ENCODE measurements at regions of chr2 and their contacts with region 1.

Region 1: GRCh38 chr2:85327822-85328617 is at the start of gene TGOLN2:
- DNase-seq: peak; percentile 88 to 96 (median 94)
- ATAC-seq: peak; percentile 84
- H3K4me3 ChIP-seq: peak within 1 kb of the TSS; percentile 89
- H3K4me3 Mint-ChIP-seq: peak within 1 kb of the TSS; percentile 96
- H3K27ac ChIP-seq: peak within 1 kb of the TSS; percentile 95 to 97
- H3K27ac Mint-ChIP-seq: peak within 1 kb of the TSS; percentile 97
- H3K4me1 ChIP-seq: peaks cover 35% of the 10 kb centered on the region
- H3K4me1 Mint-ChIP-seq: peaks cover 54% of the 10 kb centered on the region
- H3K27me3 ChIP-seq: no peaks in the 10 kb centered on the region
- H3K27me3 Mint-ChIP-seq: no peaks in the 10 kb centered on the region
- CTCF ChIP-seq: no peak
- total RNA-seq, gene TGOLN2: 172 to 175 TPM

Region 2: DNA sequence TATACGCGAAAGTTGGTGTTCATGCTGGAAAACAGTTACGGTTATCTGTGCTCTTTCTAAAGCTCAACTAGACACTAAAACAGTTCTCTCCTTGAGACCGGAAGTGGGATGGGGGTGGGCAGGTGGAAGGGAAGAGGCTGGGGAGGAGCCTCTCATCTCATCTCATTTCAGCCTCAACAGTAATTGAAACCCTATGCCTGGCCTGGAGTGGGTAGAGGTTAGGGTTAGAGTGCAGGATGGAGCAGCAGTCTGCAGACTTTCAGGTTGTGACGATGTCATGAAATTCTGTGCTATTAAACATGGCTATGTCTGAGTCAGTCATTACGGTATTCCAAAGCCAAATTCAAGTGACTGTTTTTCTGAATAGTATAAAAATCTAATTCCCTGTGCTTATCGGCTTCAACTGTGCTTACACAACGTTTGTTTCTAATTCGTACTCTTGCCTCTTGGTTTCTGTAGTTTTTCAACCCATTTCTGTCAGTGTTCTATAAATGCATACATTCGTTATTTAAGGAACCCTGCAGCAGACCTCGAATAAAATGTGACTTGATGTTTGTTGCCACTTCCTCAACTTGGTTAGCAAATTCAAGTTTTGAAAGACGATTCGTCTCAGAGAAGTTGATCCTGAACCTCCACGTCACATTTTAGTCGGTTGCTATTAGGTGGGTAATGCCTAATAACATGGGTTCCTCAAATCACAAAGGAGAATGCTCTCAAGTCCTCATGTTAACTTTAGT is 270.6 kb before region 1 on chr2:
- CTCF ChIA-PET with region 1: no interaction called
- POLR2A ChIA-PET with region 1: no interaction called
- intact Hi-C with region 1: no loop called
- DNase-seq: peak in 1 of 14 experiments; percentile 14
- ATAC-seq: no peak
- H3K4me3 ChIP-seq: no peak overlapping the region
- H3K4me3 Mint-ChIP-seq: no peak overlapping the region
- H3K27ac ChIP-seq: no peak overlapping the region
- H3K27ac Mint-ChIP-seq: peak overlapping the region; percentile 57
- H3K4me1 ChIP-seq: peaks cover 5% of the 10 kb centered on the region
- H3K4me1 Mint-ChIP-seq: peaks cover 46% of the 10 kb centered on the region
- H3K27me3 ChIP-seq: no peaks in the 10 kb centered on the region
- H3K27me3 Mint-ChIP-seq: no peaks in the 10 kb centered on the region
- CTCF ChIP-seq: no peak

Region 3: GRCh38 chr2:85288244-85288725 is 39.7 kb before region 1 on chr2:
- CTCF ChIA-PET with region 1: no interaction called
- POLR2A ChIA-PET with region 1: interaction called, 15 read pairs
- intact Hi-C with region 1: no loop called
- DNase-seq: no peak
- ATAC-seq: no peak
- H3K4me3 ChIP-seq: no peak overlapping the region
- H3K4me3 Mint-ChIP-seq: no peak overlapping the region
- H3K27ac ChIP-seq: no peak overlapping the region
- H3K27ac Mint-ChIP-seq: no peak overlapping the region
- H3K4me1 ChIP-seq: peaks cover 24% of the 10 kb centered on the region
- H3K4me1 Mint-ChIP-seq: peaks cover 30% of the 10 kb centered on the region
- H3K27me3 ChIP-seq: no peaks in the 10 kb centered on the region
- H3K27me3 Mint-ChIP-seq: no peaks in the 10 kb centered on the region
- CTCF ChIP-seq: no peak

Region 4: DNA sequence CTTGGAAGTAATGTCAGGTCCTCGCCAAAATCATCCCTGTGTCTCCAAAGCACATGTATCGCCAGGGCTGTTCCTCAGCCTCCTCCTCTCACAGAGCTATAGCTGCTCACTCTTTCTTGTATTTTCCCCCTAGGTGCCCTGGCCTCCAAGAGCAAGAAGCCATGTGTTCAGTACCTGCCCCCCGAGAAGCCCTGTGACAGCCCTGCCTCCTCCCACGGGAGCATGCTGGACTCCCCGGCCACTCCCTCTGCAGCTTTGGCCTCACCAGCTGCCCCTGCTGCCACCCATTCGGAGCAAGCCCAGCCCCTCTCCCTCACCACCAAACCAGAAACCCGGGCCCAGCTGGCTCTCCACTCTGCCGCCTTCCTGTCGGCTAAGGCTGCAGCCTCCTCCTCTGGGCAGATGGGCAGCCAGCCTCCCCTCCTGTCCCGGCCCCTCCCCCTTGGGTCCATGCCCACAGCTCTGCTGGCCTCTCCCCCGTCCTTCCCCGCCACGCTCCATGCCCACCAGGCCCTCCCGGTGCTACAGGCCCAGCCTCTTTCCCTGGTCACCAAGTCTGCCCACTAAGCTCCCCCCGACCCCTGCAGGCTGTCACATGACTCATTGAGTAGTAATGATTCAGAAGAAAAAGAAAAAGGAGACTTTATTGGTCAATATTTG is 19.0 kb before region 1 on chr2:
- CTCF ChIA-PET with region 1: interaction called, 4 read pairs
- POLR2A ChIA-PET with region 1: interaction called, 109 read pairs
- intact Hi-C with region 1: loop called in 1 of 2 experiments (anchors 1 kb)
- DNase-seq: peak in 2 of 14 experiments; percentile 23 to 34
- ATAC-seq: peak; percentile 6
- H3K4me3 ChIP-seq: peak overlapping the region; percentile 41
- H3K4me3 Mint-ChIP-seq: peak overlapping the region; percentile 76
- H3K27ac ChIP-seq: peak overlapping the region; percentile 42 to 52
- H3K27ac Mint-ChIP-seq: peak overlapping the region; percentile 88
- H3K4me1 ChIP-seq: peaks cover 45% of the 10 kb centered on the region
- H3K4me1 Mint-ChIP-seq: peaks cover 36% of the 10 kb centered on the region
- H3K27me3 ChIP-seq: no peaks in the 10 kb centered on the region
- H3K27me3 Mint-ChIP-seq: no peaks in the 10 kb centered on the region
- CTCF ChIP-seq: no peak

Region 5: GRCh38 chr2:85376291-85377065 is 48.5 kb after region 1 on chr2:
- CTCF ChIA-PET with region 1: no interaction called
- POLR2A ChIA-PET with region 1: no interaction called
- intact Hi-C with region 1: no loop called
- DNase-seq: no peak
- ATAC-seq: no peak
- H3K4me3 ChIP-seq: no peak overlapping the region
- H3K4me3 Mint-ChIP-seq: no peak overlapping the region
- H3K27ac ChIP-seq: no peak overlapping the region
- H3K27ac Mint-ChIP-seq: no peak overlapping the region
- H3K4me1 ChIP-seq: no peaks in the 10 kb centered on the region
- H3K4me1 Mint-ChIP-seq: no peaks in the 10 kb centered on the region
- H3K27me3 ChIP-seq: no peaks in the 10 kb centered on the region
- H3K27me3 Mint-ChIP-seq: no peaks in the 10 kb centered on the region
- CTCF ChIP-seq: no peak

Region 6: DNA sequence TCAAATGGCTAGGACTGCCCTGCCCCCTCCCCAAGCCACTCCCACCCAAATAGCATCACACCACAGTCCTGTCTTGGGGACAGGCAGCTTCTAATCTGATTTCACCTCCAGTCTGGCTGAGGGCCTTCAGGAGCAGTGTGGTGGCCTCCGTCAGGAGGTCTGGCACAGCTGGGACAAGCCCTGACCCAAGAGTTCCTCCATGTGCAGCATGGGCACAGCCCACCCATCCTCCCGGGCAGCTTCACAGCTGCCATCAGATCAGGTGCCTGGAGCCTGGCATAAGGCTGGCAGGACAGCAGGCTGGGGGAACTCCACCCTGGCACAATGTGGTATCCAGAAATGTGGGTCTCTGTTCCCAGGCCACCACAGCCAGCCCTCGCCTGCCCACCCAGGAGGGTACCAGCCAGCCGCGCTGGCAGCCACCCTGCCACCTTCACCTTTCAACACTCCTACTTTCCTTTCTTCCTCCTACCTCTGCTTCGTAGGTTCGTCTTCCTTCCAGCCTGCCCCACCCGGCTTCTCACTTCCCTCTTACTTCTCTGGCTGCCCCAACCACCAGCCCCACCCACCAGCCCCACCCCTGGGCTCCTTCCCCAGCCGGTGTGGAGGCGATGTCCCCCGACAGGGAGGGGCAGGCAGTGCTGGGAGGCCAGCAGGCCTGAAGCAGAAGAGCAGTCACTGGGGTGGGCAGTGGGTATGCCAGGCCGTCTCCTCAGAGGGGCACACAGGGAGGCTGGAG is 82.0 kb after region 1 on chr2 and contains the start of gene CAPG:
- CTCF ChIA-PET with region 1: no interaction called
- POLR2A ChIA-PET with region 1: interaction called, 21 read pairs
- intact Hi-C with region 1: no loop called
- DNase-seq: peak in 11 of 14 experiments; percentile 17 to 68 (median 44)
- ATAC-seq: peak; percentile 13
- H3K4me3 ChIP-seq: peak within 1 kb of the TSS; percentile 56
- H3K4me3 Mint-ChIP-seq: peak within 1 kb of the TSS; percentile 81
- H3K27ac ChIP-seq: peak within 1 kb of the TSS; percentile 31 to 34
- H3K27ac Mint-ChIP-seq: peak within 1 kb of the TSS; percentile 77
- H3K4me1 ChIP-seq: peaks cover 69% of the 10 kb centered on the region
- H3K4me1 Mint-ChIP-seq: peaks cover 67% of the 10 kb centered on the region
- H3K27me3 ChIP-seq: peaks cover 0 to 5% of the 10 kb centered on the region in 2 experiments
- H3K27me3 Mint-ChIP-seq: peaks cover 2% of the 10 kb centered on the region
- CTCF ChIP-seq: no peak
- total RNA-seq, gene CAPG: 21.7 to 23.3 TPM

Region 7: GRCh38 chr2:85437488-85438284 is 109.7 kb after region 1 on chr2:
- CTCF ChIA-PET with region 1: no interaction called
- POLR2A ChIA-PET with region 1: interaction called, 17 read pairs
- intact Hi-C with region 1: no loop called
- DNase-seq: peak; percentile 49 to 91 (median 70)
- ATAC-seq: peak; percentile 82
- H3K4me3 ChIP-seq: peak overlapping the region; percentile 51
- H3K4me3 Mint-ChIP-seq: peak overlapping the region; percentile 90
- H3K27ac ChIP-seq: peak overlapping the region; percentile 55 to 87
- H3K27ac Mint-ChIP-seq: peak overlapping the region; percentile 91
- H3K4me1 ChIP-seq: peaks cover 39% of the 10 kb centered on the region
- H3K4me1 Mint-ChIP-seq: peaks cover 37% of the 10 kb centered on the region
- H3K27me3 ChIP-seq: no peaks in the 10 kb centered on the region
- H3K27me3 Mint-ChIP-seq: no peaks in the 10 kb centered on the region
- CTCF ChIP-seq: no peak

Region 8: DNA sequence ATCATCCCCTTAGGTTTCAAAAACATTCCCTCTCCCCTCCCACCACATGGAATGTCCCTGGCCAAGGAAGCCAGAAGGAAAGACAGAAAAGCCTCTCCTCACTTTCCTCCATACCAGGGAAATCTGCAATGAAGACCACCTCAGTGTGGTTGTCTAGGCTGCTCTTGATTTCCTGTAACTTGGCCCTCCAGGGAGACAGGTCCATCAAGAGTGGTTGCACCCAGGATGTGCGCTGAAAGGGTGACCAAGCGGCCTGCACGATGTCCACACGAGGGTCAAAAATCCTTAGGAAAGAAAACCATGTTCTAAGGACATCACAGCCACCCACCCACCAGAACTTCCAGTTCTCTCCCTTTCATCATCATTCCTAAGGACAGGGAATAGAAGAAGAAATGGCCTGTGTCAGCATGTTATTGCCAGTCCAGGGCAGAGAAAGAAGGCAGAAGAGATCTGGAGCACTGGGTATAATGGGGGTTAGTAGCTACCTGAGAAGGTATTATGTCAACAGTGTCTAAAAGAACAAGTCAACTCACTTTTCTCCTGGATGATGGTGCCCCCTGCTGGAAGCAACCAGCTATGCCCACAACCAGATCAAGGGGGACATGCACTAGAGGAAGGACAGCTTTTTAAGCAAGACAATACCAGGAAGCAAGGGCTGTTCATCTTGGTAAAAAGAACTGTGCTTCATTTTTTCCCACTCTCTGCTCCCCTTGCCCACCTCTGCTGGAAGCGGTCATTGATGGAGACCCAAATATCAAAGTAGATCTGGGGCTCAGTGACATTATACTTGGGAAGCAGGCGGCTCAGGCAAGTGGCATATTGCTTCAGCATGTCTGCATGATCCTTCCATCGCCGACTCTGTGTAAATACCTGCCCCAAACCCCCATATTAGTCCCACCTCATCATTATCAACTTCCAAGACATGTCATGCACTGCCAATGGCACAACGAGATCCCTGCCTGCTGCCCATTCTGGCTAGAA is 224.0 kb after region 1 on chr2:
- CTCF ChIA-PET with region 1: no interaction called
- POLR2A ChIA-PET with region 1: interaction called, 16 read pairs
- intact Hi-C with region 1: loop called in 1 of 2 experiments (anchors 5 kb)
- DNase-seq: peak; percentile 83 to 94 (median 89)
- ATAC-seq: peak; percentile 99
- H3K4me3 ChIP-seq: no peak overlapping the region
- H3K4me3 Mint-ChIP-seq: no peak overlapping the region
- H3K27ac ChIP-seq: no peak overlapping the region
- H3K27ac Mint-ChIP-seq: peak overlapping the region; percentile 22
- H3K4me1 ChIP-seq: peaks cover 4% of the 10 kb centered on the region
- H3K4me1 Mint-ChIP-seq: peaks cover 7% of the 10 kb centered on the region
- H3K27me3 ChIP-seq: no peaks in the 10 kb centered on the region
- H3K27me3 Mint-ChIP-seq: no peaks in the 10 kb centered on the region
- CTCF ChIP-seq: peak; percentile 87